Activated T-helper 1 cell treated with anti-CD3 and anti-CD28 coated beads, Interleukin-12 subunit alpha, Interleukin-12 subunit beta, Interleukin-2, Interleukin-4 antibody, amounts not matched to agents 30 ng/mL and 10 ng/mL and 1 ng/mL, durations not matched to agents 14 hours and 24 hours and 36 hours (primary cell): ENCODE measurements at regions of chr14 and their contacts with region 1.

Region 1: DNA sequence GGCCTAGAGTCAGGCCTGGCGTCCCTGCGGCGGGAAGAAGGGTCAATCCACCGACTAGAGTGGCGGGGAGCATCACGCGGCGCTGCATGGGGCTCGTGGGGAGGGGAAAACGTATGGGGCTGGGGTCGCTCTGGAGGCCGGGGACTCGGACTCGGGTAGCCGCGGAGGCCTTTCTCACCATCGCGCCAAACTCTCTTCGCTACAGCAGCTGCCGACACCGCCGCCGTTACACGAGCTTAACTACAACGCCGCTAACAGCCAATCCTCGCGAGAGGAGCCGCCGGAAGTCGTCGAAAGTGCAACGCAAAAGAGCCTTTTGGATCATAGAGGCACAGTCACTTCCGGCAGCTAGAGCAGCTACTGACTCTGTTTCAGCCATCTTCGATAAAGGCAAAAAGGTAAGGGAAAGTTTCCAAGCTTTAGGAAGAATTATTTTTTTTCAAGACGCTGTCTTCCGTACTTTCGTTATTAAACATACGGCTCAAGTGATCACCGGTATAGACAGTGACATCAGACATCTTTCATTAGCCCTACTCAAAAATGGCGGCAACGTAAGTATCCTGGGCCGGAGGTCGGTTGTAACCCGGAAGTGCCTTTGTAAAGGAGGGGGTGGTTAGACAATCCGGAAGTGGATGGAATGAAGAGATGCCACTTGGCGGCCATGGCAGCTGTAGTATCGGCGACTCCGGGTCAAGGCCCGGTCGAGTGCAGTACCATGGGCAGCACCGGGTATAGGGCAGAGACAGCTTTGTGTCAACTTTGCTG is at the starts of genes ERH and SLC39A9:
- DNase-seq: peak; percentile 91
- H3K4me3 Mint-ChIP-seq: peak within 1 kb of the TSS; percentile 96
- H3K27ac Mint-ChIP-seq: peak within 1 kb of the TSS; percentile 98
- H3K4me1 Mint-ChIP-seq: peaks cover 63% of the 10 kb centered on the region
- H3K27me3 Mint-ChIP-seq: no peaks in the 10 kb centered on the region
- total RNA-seq, gene ERH: 400 and 421 TPM in 2 replicates
- total RNA-seq, gene SLC39A9: 51.6 and 53.7 TPM in 2 replicates

Region 2: GRCh38 chr14:67674481-67675169 is 1723.6 kb before region 1 on chr14 and contains the start of gene VTI1B:
- intact Hi-C with region 1: loop called (anchors 10 kb)
- DNase-seq: peak; percentile 70
- H3K4me3 Mint-ChIP-seq: peak within 1 kb of the TSS; percentile 90
- H3K27ac Mint-ChIP-seq: peak within 1 kb of the TSS; percentile 87
- H3K4me1 Mint-ChIP-seq: peaks cover 41% of the 10 kb centered on the region
- H3K27me3 Mint-ChIP-seq: no peaks in the 10 kb centered on the region
- total RNA-seq, gene VTI1B: 77.7 and 77.8 TPM in 2 replicates

Region 3: DNA sequence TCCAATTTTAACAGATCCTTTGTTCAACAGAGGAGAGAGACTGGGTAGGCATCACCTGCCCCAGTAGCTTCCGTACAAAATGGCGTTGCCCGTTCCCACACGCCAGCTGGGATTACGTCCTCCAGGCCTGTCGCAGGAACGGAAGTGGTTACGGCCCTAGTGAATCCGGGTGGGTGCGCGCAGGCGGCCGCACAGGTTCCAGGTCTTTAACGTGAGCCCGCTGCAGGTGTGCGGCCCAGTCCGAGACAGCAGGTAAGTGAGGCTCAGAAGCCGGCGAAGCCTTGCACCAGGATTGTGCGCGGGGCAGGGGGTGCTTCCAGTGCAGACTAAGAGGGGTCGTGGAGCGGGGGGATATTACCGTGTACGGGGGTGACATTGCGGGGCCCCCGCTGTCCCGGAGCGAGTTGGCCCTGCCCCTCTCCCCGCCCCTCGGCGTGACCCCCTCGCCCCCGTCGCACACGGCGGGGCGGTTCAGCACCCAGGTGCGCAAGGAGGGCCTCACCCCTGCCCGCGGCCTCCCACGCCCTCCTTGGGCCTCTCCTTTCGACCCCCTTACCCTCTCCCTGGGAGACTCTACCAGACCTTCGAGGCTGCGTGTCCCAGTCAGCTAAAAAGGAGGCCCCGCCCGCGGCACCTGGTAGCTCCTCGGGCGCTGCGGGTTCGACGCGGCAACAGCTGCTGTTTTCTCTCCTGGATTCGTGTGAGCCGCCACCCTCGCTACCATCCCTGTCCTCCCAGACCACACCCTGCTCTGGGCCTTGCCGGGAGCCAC is 206.7 kb before region 1 on chr14 and contains the start of gene EXD2:
- intact Hi-C with region 1: loop called (anchors 1 kb)
- DNase-seq: peak; percentile 45
- H3K4me3 Mint-ChIP-seq: peak within 1 kb of the TSS; percentile 89
- H3K27ac Mint-ChIP-seq: peak within 1 kb of the TSS; percentile 82
- H3K4me1 Mint-ChIP-seq: peaks cover 36% of the 10 kb centered on the region
- H3K27me3 Mint-ChIP-seq: peaks cover 2% of the 10 kb centered on the region
- total RNA-seq, gene EXD2: 6.3 and 6.5 TPM in 2 replicates

Region 4: GRCh38 chr14:69354383-69355153 is 43.7 kb before region 1 on chr14:
- intact Hi-C with region 1: loop called (anchors 1 kb)
- DNase-seq: peak; percentile 74
- H3K4me3 Mint-ChIP-seq: peak overlapping the region; percentile 56
- H3K27ac Mint-ChIP-seq: peak overlapping the region; percentile 87
- H3K4me1 Mint-ChIP-seq: peaks cover 48% of the 10 kb centered on the region
- H3K27me3 Mint-ChIP-seq: peaks cover 7% of the 10 kb centered on the region

Region 5: GRCh38 chr14:69611201-69612011 is 213.2 kb after region 1 on chr14 and contains the start of gene SUSD6:
- intact Hi-C with region 1: loop called (anchors 1 kb)
- DNase-seq: peak; percentile 84
- H3K4me3 Mint-ChIP-seq: peak within 1 kb of the TSS; percentile 98
- H3K27ac Mint-ChIP-seq: peak within 1 kb of the TSS; percentile 93
- H3K4me1 Mint-ChIP-seq: peaks cover 61% of the 10 kb centered on the region
- H3K27me3 Mint-ChIP-seq: no peaks in the 10 kb centered on the region
- total RNA-seq, gene SUSD6: 91.3 and 94.3 TPM in 2 replicates

Region 6: DNA sequence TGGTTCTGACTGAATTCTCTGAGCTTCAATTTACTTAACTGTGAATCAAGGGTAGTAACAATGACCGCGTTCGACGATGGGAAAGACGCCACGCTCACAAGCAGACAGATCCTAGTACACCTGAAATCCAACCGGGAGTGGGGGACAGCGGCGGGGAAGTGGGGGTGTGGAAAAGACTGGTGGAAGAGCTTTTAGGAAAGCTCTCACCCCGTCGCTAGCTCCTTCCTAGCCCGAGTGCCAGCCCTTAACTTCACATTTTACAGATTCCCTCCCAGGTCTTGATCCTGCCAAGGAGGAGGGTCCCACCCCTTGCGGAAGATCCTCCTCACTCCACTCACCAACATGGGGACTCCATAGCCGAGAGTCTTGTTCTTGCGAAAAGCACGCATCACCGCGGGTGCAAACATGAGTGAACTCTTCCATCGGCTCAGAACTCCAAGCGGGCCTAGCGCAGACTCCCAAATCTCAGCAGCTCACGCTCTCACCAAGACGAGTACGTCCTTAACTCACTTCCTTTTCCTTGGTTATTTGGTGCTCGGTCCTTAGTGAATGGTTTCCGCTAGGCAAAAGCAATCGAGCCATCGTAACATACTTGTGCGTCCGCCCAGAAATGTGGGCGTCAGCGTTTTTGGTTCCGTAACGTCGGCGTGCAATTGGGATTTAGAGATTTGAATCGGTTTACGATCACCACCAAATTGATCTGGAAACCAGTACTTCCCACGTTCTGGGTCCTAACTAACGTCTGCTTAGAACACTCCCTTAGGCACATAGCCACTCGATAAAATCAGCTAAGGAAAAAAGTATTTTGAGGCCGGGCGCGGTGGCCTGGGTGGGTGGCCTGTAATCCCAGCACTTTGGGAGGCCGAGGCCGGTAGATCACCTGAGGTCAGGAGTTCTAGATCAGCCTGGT is 961.2 kb after region 1 on chr14 and contains the start of gene COX16:
- intact Hi-C with region 1: loop called (anchors 1 kb)
- DNase-seq: peak; percentile 76
- H3K4me3 Mint-ChIP-seq: peak within 1 kb of the TSS; percentile 99
- H3K27ac Mint-ChIP-seq: peak within 1 kb of the TSS; percentile 71
- H3K4me1 Mint-ChIP-seq: peaks cover 21% of the 10 kb centered on the region
- H3K27me3 Mint-ChIP-seq: no peaks in the 10 kb centered on the region
- total RNA-seq, gene COX16: 67.3 and 67.7 TPM in 2 replicates